A673 (cell line): ENCODE measurements at regions of chr22 and their contacts with region 1.

Region 1: GRCh38 chr22:48872271-48873190 is 955.1 kb downstream of the BRD1 start:
- DNase-seq: peak; percentile 95
- H3K4me3 ChIP-seq: peak overlapping the region; percentile 1
- H3K27ac ChIP-seq: peak overlapping the region; percentile 99
- H3K4me1 ChIP-seq: peaks cover 59% of the 10 kb centered on the region
- H3K27me3 ChIP-seq: no peaks in the 10 kb centered on the region
- CTCF ChIP-seq: no peak

Region 2: GRCh38 chr22:48581796-48582469 is 290.6 kb before region 1 on chr22:
- CTCF ChIA-PET with region 1: no interaction called
- POLR2A ChIA-PET with region 1: no interaction called
- intact Hi-C with region 1: loop called (anchors 5 kb)
- DNase-seq: peak; percentile 68
- H3K4me3 ChIP-seq: peak overlapping the region; percentile 61
- H3K27ac ChIP-seq: peak overlapping the region; percentile 68
- H3K4me1 ChIP-seq: peaks cover 25% of the 10 kb centered on the region
- H3K27me3 ChIP-seq: no peaks in the 10 kb centered on the region
- CTCF ChIP-seq: no peak

Region 3: GRCh38 chr22:48894064-48894671 is 21.6 kb after region 1 on chr22:
- CTCF ChIA-PET with region 1: no interaction called
- POLR2A ChIA-PET with region 1: no interaction called
- intact Hi-C with region 1: no loop called
- DNase-seq: peak; percentile 30
- H3K4me3 ChIP-seq: no peak overlapping the region
- H3K27ac ChIP-seq: no peak overlapping the region
- H3K4me1 ChIP-seq: no peaks in the 10 kb centered on the region
- H3K27me3 ChIP-seq: no peaks in the 10 kb centered on the region
- CTCF ChIP-seq: peak; percentile 60

Region 4: DNA sequence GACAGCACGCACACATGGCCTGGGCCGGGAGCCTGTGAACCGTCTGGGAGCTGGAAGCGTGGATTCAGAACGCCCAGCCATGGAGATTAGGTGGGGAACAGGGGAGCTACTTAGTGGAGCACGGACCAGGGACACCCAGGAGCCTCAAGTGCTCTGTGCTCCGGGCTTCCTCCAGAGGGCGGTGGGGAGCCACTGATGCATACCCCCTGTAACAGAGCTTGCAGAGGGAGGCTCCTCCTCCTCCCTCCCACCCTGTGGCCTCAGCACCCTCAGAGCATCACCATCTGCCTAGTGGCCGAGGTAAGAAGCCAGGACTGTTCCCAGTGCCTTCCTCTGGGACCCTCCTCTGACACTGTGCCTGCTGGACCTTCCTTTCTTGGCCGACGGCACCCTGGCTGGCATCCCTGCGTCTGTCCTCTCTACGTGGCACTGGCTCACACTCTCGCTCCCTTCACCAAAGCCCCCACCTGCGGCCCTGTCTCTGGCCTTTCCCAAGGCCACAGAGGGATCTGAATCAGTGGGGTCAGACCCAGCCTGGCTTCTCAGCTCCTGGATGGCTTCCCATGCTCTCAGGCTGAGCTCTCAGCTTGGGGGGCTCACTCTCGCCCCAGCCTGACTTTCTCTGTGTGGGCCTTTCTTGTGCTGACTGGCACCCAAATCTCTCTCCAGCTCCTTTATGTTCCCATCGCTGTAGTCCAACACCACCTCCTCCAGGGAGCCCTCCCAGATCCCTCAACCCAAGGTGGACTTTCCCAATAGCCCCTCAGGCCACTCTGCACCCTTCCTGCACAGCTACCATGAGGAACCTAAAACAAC is 174.2 kb after region 1 on chr22:
- CTCF ChIA-PET with region 1: interaction called, 5 read pairs
- POLR2A ChIA-PET with region 1: no interaction called
- intact Hi-C with region 1: loop called (anchors 5 kb)
- DNase-seq: peak; percentile 87
- H3K4me3 ChIP-seq: no peak overlapping the region
- H3K27ac ChIP-seq: peak overlapping the region; percentile 53
- H3K4me1 ChIP-seq: peaks cover 29% of the 10 kb centered on the region
- H3K27me3 ChIP-seq: no peaks in the 10 kb centered on the region
- CTCF ChIP-seq: peak; percentile 88

Region 5: GRCh38 chr22:49094151-49094550 is 221.6 kb after region 1 on chr22:
- CTCF ChIA-PET with region 1: no interaction called
- POLR2A ChIA-PET with region 1: no interaction called
- intact Hi-C with region 1: loop called (anchors 2 kb)
- DNase-seq: peak; percentile 45
- H3K4me3 ChIP-seq: no peak overlapping the region
- H3K27ac ChIP-seq: peak overlapping the region; percentile 72
- H3K4me1 ChIP-seq: peaks cover 18% of the 10 kb centered on the region
- H3K27me3 ChIP-seq: no peaks in the 10 kb centered on the region
- CTCF ChIP-seq: no peak

Region 6: DNA sequence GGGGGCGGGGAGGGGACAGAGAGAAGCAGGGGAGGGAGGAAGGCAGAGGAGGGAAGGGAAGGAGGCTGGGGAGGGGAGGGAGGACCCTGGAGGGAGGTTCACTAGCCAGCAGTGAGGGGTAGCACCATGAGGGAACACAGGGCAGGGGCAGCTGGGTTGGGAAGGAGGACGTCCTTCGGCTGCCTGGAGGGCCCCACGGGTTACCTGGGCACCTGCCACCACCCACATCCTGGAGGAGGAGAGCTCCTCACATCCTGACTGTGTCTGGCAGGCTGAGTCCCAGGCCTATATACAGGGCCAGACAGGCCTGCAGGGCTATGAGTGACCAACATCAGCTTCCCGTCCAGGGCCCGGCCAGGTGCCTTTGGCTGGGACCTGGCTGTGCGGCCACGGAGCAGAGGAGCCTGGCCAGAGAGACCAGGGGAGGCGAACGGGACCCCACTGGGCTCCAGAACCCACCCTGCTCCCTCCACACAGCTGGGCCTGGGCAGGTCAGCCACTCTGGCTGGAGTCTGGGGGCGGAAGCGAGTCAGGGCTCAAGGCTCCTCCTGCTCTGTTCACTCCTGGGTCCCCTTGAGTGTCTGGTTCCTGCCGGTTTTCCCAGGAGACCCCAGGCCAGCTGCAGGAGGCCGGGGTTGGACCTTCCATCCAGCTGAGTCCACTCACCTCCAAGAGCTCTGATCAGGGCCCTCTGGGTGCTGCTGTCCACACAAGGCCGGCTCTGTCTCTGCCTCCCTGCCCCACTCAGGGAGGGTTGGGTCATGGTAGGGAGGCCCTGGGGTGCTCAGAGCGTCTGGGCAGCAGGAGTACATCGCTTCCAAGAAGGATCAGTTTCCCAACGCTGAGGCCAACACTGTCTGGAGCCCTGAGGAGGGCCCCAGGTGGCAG is 277.4 kb after region 1 on chr22:
- CTCF ChIA-PET with region 1: no interaction called
- POLR2A ChIA-PET with region 1: interaction called, 3 read pairs
- intact Hi-C with region 1: loop called (anchors 1 kb)
- DNase-seq: no peak
- H3K4me3 ChIP-seq: no peak overlapping the region
- H3K27ac ChIP-seq: peak overlapping the region; percentile 82
- H3K4me1 ChIP-seq: peaks cover 28% of the 10 kb centered on the region
- H3K27me3 ChIP-seq: no peaks in the 10 kb centered on the region
- CTCF ChIP-seq: no peak

Region 7: GRCh38 chr22:49305214-49305909 is 432.8 kb after region 1 on chr22:
- CTCF ChIA-PET with region 1: no interaction called
- POLR2A ChIA-PET with region 1: no interaction called
- intact Hi-C with region 1: loop called (anchors 5 kb)
- DNase-seq: peak; percentile 64
- H3K4me3 ChIP-seq: no peak overlapping the region
- H3K27ac ChIP-seq: peak overlapping the region; percentile 63
- H3K4me1 ChIP-seq: peaks cover 9% of the 10 kb centered on the region
- H3K27me3 ChIP-seq: no peaks in the 10 kb centered on the region
- CTCF ChIP-seq: peak; percentile 97

Region 8: GRCh38 chr22:49632199-49633009 is 759.9 kb after region 1 on chr22:
- CTCF ChIA-PET with region 1: no interaction called
- POLR2A ChIA-PET with region 1: no interaction called
- intact Hi-C with region 1: loop called (anchors 5 kb)
- DNase-seq: peak; percentile 89
- H3K4me3 ChIP-seq: peak overlapping the region; percentile 17
- H3K27ac ChIP-seq: peak overlapping the region; percentile 73
- H3K4me1 ChIP-seq: peaks cover 31% of the 10 kb centered on the region
- H3K27me3 ChIP-seq: no peaks in the 10 kb centered on the region
- CTCF ChIP-seq: peak; percentile 98